Vagina (tissue), 2 donors: ENCODE measurements at regions of chr17 and their contacts with region 1.

Region 1: DNA sequence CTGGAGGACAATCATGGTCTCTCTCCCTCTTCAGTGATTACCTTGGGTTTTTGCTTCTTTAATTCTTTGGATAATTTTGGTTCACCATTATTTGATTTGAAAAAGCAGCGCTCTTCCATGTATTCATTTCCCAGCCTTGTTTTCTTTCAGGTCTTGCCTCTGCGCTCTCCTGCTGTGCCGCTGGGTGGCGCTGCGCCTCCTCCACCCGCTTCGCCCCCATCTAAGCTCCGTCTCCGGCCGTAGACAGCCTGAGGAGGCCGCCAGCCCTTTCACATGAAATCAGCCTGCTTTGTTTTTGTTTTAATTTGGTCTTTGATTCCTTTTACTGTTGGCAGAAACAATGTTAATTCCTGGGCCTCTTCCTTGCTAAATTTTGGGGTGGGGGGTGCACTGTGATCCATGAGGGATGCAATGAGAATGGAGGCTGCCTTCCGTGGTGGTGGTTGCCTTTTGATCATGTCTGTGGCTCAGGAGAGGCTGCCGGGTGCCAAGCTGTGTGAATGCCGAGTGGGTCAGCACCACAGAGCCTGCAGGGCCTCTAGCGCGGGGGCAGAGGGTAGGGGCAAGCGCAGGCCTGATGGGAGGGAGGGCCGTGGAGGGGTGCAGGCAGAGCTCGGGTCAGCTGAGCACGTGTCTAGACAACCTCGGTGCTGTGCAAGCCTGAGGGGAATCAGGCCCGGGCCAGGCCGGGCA is 64.1 kb downstream of the PLD6 start:
- DNase-seq: no peak
- H3K4me3 ChIP-seq: no peak overlapping the region
- H3K27ac ChIP-seq: peak overlapping the region; percentile 29
- H3K4me1 ChIP-seq: peaks cover 21% of the 10 kb centered on the region
- H3K27me3 ChIP-seq: no peaks in the 10 kb centered on the region
- CTCF ChIP-seq: peak in 2 of 3 experiments; percentile 40 to 63
- POLR2A ChIP-seq: no peak

Region 2: DNA sequence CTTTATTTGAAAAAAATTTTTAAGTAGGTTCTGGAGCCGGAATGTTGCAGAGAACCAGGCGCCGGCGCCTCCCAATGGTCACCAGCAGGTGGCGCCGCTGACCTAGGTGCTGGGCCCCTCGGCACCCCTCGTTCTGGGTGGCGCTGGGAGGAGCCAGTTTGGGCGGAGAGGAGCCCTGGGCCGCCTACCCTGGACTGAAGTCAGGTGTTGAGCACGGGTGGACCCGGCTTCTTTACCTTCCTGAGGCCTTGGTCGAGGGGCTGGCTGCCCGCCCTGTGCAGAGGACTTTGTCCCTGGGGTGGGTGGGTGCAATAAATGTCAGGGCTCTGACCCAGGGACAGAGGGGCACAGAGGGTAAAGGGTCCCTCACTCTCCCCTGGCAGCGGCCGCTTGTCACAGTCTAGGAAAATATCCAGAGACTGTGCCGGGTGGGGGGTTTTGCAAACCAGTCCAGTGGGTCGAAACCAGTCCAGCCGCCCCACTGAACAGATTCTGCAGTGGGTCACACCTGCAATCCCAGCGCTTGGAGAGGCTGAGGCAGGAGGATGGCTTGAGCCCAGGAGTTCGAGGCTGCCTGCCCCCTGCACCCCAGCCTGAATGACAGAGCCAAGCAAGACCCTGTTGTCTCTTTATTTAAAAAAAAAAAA is 140.0 kb before region 1 on chr17:
- intact Hi-C with region 1: loop called (anchors 10 kb)
- DNase-seq: no peak
- H3K4me3 ChIP-seq: no peak overlapping the region
- H3K27ac ChIP-seq: no peak overlapping the region
- H3K4me1 ChIP-seq: peaks cover 8% of the 10 kb centered on the region
- H3K27me3 ChIP-seq: no peaks in the 10 kb centered on the region
- CTCF ChIP-seq: peak; percentile 93 to 97 (median 93)
- POLR2A ChIP-seq: no peak

Region 3: DNA sequence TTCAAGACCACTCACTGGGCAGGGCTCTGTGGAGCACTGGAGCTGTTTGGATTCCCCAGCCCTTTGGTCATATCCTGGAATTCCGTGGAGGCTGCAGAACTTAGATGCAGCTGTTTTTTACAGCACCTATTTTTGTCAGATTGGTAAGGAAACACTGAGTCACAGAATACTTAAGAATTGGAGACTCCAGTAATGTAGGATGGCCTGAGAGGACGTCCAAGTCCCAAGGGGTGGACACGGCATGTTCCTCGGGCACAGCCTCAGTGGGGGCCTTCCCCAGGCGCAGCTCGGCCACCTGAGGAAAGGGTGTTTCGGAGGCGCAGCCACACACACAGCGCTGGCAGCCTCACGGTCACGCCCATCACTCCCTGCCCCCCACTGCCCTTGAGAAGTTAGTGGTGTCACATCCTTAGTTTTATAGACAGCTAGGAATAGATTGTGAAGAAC is 49.4 kb after region 1 on chr17:
- intact Hi-C with region 1: no loop called
- DNase-seq: no peak
- H3K4me3 ChIP-seq: no peak overlapping the region
- H3K27ac ChIP-seq: peak overlapping the region; percentile 74
- H3K4me1 ChIP-seq: peaks cover 31% of the 10 kb centered on the region
- H3K27me3 ChIP-seq: no peaks in the 10 kb centered on the region
- CTCF ChIP-seq: no peak
- POLR2A ChIP-seq: no peak

Region 4: DNA sequence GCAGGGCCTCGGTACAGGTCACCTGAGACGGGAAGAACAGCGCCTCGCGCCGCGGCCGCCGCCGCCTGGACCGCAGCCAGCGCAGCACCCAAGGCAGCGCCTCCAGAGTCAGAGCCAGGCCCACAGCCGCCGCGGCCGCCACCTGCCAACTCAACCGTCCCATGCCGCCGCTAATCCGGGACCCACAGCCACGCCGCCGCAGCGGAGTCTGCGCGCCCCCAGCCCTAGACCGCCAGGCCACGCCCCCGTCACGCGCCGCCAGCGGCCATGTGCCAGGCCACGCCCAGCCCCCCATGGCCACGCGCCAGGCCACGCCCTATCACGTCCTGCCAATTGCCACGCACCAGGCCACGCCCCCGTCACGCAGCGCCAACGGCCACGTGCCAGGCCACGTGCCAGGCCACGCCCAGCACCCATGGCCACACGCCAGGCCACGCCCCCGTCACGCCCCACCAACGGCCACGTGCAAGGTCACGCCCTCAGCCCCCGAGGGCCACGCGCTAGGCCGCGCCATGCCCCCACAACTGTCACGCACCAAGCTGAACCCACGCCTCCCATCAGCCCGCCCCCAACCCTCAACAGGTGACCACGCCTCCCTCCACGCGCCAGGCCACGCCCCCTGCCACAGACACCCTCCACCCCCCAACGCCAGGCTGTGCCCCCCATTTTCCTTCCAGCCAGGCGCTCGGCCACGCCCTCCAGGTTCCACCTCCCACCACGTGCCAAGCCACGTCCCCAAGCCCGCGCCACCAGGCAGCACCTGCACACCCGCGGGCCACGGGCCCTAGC is 64.3 kb after region 1 on chr17 and contains the start of gene PLD6:
- intact Hi-C with region 1: loop called (anchors 10 kb)
- DNase-seq: no peak
- H3K4me3 ChIP-seq: peak within 1 kb of the TSS; percentile 56 to 60
- H3K27ac ChIP-seq: peak within 1 kb of the TSS; percentile 94
- H3K4me1 ChIP-seq: peaks cover 44% of the 10 kb centered on the region
- H3K27me3 ChIP-seq: no peaks in the 10 kb centered on the region
- CTCF ChIP-seq: no peak
- POLR2A ChIP-seq: no peak
- total RNA-seq, gene PLD6: 0.74 TPM

Region 5: DNA sequence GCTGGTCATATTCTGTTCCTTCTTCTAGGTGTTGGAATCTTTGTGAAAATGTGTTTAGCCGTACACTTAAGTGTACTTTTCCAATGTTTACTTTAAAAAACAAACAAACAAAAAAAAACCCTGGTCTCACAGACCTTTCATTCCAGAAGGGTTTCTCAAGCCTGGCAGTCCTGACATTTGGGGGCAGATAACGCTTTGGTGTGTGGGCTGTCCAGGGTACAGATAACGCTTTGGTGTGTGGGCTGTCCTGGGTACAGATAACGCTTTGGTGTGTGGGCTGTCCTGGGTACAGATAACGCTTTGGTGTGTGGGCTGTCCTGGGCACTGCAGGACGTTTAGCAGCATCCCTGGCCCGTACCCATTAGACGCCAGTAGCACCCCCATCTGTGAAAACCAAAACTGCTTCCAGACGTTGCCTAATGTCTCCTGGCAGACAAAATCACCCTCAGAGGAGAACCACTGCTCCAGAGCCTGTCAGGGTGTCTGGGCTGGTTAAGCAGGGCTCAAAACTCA is 110.2 kb after region 1 on chr17:
- intact Hi-C with region 1: no loop called
- DNase-seq: no peak
- H3K4me3 ChIP-seq: no peak overlapping the region
- H3K27ac ChIP-seq: no peak overlapping the region
- H3K4me1 ChIP-seq: no peaks in the 10 kb centered on the region
- H3K27me3 ChIP-seq: no peaks in the 10 kb centered on the region
- CTCF ChIP-seq: no peak
- POLR2A ChIP-seq: no peak